Calu3 (cell line): ENCODE measurements at regions of chr3 and their contacts with region 1.

Region 1: DNA sequence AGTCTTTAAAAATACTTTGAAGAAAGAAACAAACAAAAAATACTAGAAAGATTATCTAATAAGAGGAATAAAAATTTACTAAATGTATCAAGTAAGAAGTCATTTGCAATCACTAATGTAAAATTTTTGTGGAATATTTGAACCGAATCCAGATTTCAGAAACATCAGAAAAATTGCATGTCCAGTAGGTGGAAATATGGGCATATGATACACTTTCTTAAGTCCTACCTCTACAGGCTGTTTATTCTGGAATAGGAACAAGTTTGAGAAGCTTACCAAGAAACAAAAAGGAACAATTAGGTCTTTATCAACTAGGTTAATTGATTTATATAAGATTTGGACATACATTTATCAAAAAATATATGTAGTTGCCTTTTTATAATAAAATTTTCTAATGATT is 292.9 kb upstream of the ROBO1 start:
- DNase-seq: no peak
- H3K4me3 Mint-ChIP-seq: no peak overlapping the region
- H3K27ac Mint-ChIP-seq: no peak overlapping the region
- H3K4me1 Mint-ChIP-seq: peaks cover 9% of the 10 kb centered on the region
- H3K27me3 Mint-ChIP-seq: no peaks in the 10 kb centered on the region
- CTCF ChIP-seq: no peak

Region 2: DNA sequence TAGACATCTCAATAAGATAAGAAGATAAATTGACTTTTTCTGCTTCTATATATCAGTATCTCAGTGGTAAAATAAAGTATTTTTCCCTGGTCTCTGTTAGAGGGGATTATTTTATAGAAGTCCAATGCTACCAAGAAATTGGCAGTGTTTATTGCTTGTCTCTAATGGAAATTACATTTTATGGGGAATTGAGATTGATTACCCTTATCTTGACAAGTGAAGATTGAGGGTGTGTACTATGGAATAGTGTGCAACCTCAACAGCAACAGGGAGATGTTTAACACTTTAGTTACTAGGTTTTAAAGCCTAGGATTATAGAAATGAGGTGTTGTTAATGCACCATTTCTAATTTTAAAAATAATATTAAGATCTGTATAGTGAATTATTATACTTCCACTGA is 138.0 kb before region 1 on chr3:
- CTCF ChIA-PET with region 1: no interaction called
- intact Hi-C with region 1: no loop called
- DNase-seq: no peak
- H3K4me3 Mint-ChIP-seq: no peak overlapping the region
- H3K27ac Mint-ChIP-seq: no peak overlapping the region
- H3K4me1 Mint-ChIP-seq: no peaks in the 10 kb centered on the region
- H3K27me3 Mint-ChIP-seq: no peaks in the 10 kb centered on the region
- CTCF ChIP-seq: no peak

Region 3: DNA sequence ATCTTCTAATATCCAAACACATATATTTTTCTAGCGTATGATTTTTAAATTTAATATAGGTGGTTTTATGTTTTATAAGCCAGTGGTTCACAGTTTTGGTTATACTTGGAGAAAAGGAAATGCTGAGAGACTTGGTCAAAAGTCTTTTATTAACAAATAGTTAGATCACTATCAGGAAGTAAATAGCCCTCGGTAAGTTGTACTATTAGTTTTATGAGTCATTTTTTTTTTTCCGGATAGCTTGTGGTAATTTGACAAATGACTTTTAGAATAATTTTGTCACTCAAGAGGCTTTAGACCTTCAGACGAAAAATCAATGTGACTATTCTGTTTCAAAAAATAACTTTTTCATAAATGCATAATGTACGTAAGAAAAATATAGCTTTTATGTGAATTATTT is 60.6 kb before region 1 on chr3:
- CTCF ChIA-PET with region 1: no interaction called
- intact Hi-C with region 1: no loop called
- DNase-seq: no peak
- H3K4me3 Mint-ChIP-seq: no peak overlapping the region
- H3K27ac Mint-ChIP-seq: peak overlapping the region; percentile 76
- H3K4me1 Mint-ChIP-seq: peaks cover 8% of the 10 kb centered on the region
- H3K27me3 Mint-ChIP-seq: no peaks in the 10 kb centered on the region
- CTCF ChIP-seq: no peak

Region 4: GRCh38 chr3:80688814-80689213 is 628.1 kb after region 1 on chr3:
- CTCF ChIA-PET with region 1: no interaction called
- intact Hi-C with region 1: loop called (anchors 10 kb)
- DNase-seq: peak; percentile 17
- H3K4me3 Mint-ChIP-seq: no peak overlapping the region
- H3K27ac Mint-ChIP-seq: no peak overlapping the region
- H3K4me1 Mint-ChIP-seq: no peaks in the 10 kb centered on the region
- H3K27me3 Mint-ChIP-seq: no peaks in the 10 kb centered on the region
- CTCF ChIP-seq: peak; percentile 28